Left ventricle myocardium superior (tissue), 1 donor: ENCODE measurements at regions of chr17 and their contacts with region 1.

Region 1: DNA sequence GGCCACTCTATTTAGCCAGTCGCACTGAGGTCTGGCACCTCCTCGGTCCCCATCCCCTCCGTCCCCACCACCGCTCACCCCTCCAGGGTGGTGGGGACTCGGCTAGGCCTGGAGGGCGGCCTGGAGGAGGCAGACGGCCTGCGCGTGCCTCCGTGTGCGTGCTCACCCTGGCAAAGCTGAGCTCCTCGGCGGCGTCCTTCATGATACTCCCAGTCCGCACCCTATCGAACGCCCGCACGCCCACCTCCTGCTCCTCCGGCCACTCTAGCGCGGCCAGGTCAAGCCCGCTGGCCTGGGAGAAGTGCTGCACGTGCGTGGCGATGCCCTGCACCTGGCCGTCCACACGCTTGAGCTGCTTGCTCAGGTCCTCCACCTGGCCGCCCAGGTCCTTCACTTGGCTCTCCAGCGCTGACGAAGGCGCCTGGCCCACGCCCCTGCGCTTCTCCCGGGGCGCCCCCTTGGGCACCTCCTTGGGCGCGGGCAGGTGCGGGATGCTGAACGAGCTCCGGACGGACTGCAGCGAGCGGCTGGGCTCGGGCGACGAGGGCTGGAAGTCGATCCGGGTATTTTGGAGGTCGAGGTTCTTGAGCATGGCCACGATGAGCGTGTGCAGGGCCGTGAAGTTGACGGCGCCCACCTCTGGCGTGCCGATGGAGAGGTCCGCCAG is 644 bp downstream of the QRICH2 start:
- DNase-seq: no peak
- ATAC-seq: no peak

Region 2: DNA sequence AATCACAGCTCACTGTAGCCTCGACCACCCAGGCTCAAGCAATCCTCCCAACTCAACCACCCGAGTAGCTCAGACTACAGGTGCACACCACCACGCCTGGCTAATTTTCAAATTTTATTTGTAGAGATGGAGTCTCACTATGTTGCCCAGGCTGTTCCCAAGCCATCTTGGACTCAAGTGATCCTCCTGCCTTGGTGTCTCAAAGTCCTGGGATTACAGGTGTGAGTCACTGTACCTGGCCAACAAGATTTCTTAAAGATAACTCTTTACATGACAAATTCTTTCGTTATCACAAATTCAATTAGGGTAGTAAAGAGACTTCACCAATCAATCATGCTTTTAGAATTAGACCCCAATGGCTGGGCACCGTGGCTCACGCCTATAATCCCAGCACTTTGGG is 33.9 kb after region 1 on chr17:
- intact Hi-C with region 1: loop called (anchors 5 kb)
- DNase-seq: no peak
- ATAC-seq: no peak

Region 3: GRCh38 chr17:76397687-76398487 is 90.5 kb after region 1 on chr17:
- intact Hi-C with region 1: loop called (anchors 5 kb)
- DNase-seq: peak; percentile 93
- ATAC-seq: peak; percentile 82